ENCODE measurements at regions of chr2 and their contacts with region 1.

Region 1: GRCh38 chr2:25878361-25879132 is at the start of gene ASXL2:
- DNase-seq: peak; percentile 98
- H3K4me3 ChIP-seq: peak within 1 kb of the TSS; percentile 99
- H3K27ac ChIP-seq: peak within 1 kb of the TSS; percentile 83
- H3K4me1 ChIP-seq: peaks cover 26% of the 10 kb centered on the region
- CTCF ChIP-seq: no peak
- total RNA-seq, gene ASXL2: 11.4 and 12.4 TPM in 2 replicates

Region 2: GRCh38 chr2:25673300-25674076 is 205.1 kb before region 1 on chr2 and contains the start of gene DTNB:
- CTCF ChIA-PET with region 1: no interaction called
- POLR2A ChIA-PET with region 1: interaction called, 7 read pairs
- intact Hi-C with region 1: loop called (anchors 2 kb)
- DNase-seq: peak; percentile 89
- H3K4me3 ChIP-seq: peak within 1 kb of the TSS; percentile 80
- H3K27ac ChIP-seq: peak within 1 kb of the TSS; percentile 51
- H3K4me1 ChIP-seq: peaks cover 14% of the 10 kb centered on the region
- CTCF ChIP-seq: no peak
- total RNA-seq, gene DTNB: 9.3 and 16.1 TPM in 2 replicates

Region 3: DNA sequence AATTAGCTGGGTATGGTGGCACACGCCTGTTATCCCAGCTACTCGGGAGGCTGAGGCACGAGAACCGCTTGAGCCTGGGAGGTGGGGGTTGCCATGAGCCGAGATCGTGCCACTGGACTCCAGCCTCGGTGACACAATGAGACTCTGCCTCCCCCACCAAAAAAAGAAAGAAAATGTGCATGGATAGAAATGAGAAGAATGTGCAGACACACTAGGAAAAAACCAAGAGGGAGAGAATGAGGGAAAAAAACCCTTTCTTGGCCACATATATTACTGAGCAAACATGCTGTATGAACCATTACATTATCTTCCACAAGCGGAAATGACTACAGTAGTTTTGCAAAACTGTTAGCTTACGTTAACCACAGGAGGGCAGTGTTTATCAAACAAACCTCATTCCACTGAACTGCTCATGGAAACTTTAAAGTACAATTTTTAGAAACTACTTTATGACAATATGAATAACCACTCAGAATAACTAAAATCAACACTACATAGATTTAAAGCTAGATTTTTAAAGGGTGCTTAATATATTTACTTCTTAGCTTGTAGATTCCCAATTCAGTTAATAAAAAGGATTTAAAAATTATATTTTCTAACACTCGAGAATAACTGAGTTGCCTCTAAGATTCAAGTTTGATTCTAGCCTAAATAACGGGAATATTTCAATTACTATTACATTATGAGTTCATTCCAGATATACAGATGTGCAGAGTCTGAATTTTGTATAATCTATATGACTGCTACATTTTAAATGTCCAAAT is 26.6 kb before region 1 on chr2:
- CTCF ChIA-PET with region 1: interaction called, 6 read pairs
- POLR2A ChIA-PET with region 1: interaction called, 15 read pairs
- intact Hi-C with region 1: no loop called
- DNase-seq: peak; percentile 78
- H3K4me3 ChIP-seq: no peak overlapping the region
- H3K27ac ChIP-seq: peak overlapping the region; percentile 11
- H3K4me1 ChIP-seq: peaks cover 19% of the 10 kb centered on the region
- CTCF ChIP-seq: peak; percentile 90

Region 4: GRCh38 chr2:25867396-25868003 is 11.0 kb before region 1 on chr2:
- CTCF ChIA-PET with region 1: no interaction called
- POLR2A ChIA-PET with region 1: interaction called, 12 read pairs
- intact Hi-C with region 1: no loop called
- DNase-seq: no peak
- H3K4me3 ChIP-seq: no peak overlapping the region
- H3K27ac ChIP-seq: no peak overlapping the region
- H3K4me1 ChIP-seq: no peaks in the 10 kb centered on the region
- CTCF ChIP-seq: no peak

Region 5: GRCh38 chr2:26033818-26034636 is 155.5 kb after region 1 on chr2 and contains the start of gene RAB10:
- CTCF ChIA-PET with region 1: no interaction called
- POLR2A ChIA-PET with region 1: interaction called, 6 read pairs
- intact Hi-C with region 1: loop called (anchors 2 kb)
- DNase-seq: peak; percentile 99
- H3K4me3 ChIP-seq: peak within 1 kb of the TSS; percentile 95
- H3K27ac ChIP-seq: peak within 1 kb of the TSS; percentile 85
- H3K4me1 ChIP-seq: peaks cover 27% of the 10 kb centered on the region
- CTCF ChIP-seq: no peak
- total RNA-seq, gene RAB10: 58.3 and 109 TPM in 2 replicates

Measured in OCI-LY7 (cell line).